Activated T-helper 2 cell treated with anti-CD3 and anti-CD28 coated beads, Interferon-gamma antibody, Interleukin-2, Interleukin-4, amounts not matched to agents 10 μg/mL and 5 μg/mL and 100 μg/mL, durations not matched to agents 14 hours and 24 hours and 36 hours (primary cell): ENCODE measurements at regions of chr1 and their contacts with region 1.

Region 1: DNA sequence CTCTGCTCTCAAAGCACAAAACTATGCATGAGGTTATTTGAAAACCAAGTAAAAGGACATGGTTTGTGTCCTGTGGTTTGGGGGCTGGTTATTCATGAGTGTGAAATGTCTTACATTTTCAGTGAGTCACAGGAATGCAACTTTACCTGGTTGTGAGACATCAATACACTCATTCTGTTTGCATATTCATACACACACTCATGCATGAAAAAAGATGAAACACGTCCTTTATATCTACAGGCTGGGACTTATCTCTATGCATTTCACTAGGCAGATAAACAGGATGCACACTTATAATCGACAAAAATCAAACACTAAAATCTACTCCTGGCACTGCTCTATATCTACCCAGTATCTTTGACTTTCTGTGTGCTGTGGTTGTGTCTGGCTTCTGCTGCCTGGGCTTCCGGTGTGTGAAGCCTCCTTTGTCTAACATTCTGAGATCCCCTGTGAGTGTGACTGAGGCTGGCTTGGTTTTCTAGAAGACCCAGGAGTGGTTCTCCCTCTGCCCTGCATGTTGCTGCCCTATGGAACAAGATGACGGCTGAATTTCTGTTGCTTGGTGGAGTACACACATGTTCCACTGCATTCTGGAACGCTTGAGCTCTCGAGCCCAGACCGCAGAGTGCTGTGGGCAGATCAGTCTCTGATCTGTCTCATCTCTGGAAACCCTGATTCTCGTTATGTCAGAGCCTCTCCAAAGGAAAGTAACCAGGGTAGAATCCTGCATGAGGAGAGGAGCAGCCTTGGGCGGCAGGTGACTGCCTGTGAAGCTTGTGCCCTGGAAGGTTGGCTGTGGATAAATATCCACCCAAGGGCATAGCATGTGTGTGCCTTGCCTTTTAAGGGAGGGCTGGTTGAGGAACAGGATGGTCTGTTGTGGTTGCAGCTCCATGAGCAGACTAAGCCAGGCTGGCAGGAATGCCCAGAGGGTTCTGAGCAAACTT is 19.7 kb upstream of the FASLG start:
- DNase-seq: peak; percentile 76
- H3K4me3 Mint-ChIP-seq: peak overlapping the region; percentile 47
- H3K27ac Mint-ChIP-seq: peak overlapping the region; percentile 98
- H3K4me1 Mint-ChIP-seq: peaks cover 74% of the 10 kb centered on the region
- H3K27me3 Mint-ChIP-seq: peaks cover 5% of the 10 kb centered on the region

Region 2: GRCh38 chr1:172449585-172450534 is 189.3 kb before region 1 on chr1:
- intact Hi-C with region 1: loop called (anchors 1 kb)
- DNase-seq: peak; percentile 29
- H3K4me3 Mint-ChIP-seq: no peak overlapping the region
- H3K27ac Mint-ChIP-seq: no peak overlapping the region
- H3K4me1 Mint-ChIP-seq: peaks cover 32% of the 10 kb centered on the region
- H3K27me3 Mint-ChIP-seq: peaks cover 2% of the 10 kb centered on the region

Region 3: DNA sequence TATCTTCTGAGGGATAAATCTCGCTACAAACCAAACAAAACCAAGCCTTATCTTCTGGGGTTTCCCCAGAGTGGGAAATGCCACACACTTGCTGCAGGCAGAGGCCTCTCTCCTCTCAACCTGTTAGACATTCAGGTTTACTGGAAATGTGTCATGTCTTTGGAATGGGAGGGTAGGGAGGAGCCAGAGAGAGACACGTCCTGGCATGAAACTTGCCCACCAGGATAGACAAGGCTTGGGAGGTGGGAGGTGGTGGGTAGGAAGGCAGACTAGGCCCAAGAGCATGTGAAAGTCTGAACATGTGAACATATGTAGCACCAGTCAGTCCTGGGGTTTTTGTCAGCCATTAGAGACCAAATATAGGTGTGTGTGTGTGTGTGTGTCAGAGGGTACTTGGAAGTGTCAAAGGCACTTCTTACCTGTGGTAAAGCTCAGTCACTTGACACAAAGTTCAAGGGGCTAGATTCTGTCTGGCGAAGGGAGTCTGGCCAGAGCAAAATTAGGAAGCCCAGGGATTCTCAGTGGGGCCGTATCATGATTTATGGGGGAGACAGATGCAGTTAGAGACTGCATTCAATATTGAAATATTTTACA is 162.8 kb before region 1 on chr1:
- intact Hi-C with region 1: no loop called
- DNase-seq: no peak
- H3K4me3 Mint-ChIP-seq: no peak overlapping the region
- H3K27ac Mint-ChIP-seq: no peak overlapping the region
- H3K4me1 Mint-ChIP-seq: peaks cover 3% of the 10 kb centered on the region
- H3K27me3 Mint-ChIP-seq: peaks cover 9% of the 10 kb centered on the region

Region 4: DNA sequence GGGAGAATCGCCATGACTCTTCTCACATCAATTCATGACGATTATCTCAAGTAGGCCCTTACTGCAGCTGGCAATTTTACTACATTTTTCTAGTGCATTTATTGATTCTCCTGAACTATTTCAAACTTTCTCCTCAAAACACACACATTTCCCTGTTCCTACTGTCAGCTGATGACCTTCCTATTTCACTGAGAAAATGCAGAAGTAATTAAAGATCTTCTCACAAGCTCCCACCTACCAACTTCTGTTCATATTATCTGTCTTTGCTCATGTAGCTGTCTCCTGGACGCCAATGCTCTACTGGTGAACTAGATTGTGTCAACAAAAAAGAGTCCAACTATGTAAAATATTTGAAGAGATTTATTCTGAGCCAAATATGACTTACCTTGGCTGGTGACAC is 16.6 kb before region 1 on chr1:
- intact Hi-C with region 1: no loop called
- DNase-seq: no peak
- H3K4me3 Mint-ChIP-seq: no peak overlapping the region
- H3K27ac Mint-ChIP-seq: no peak overlapping the region
- H3K4me1 Mint-ChIP-seq: peaks cover 8% of the 10 kb centered on the region
- H3K27me3 Mint-ChIP-seq: peaks cover 9% of the 10 kb centered on the region

Region 5: DNA sequence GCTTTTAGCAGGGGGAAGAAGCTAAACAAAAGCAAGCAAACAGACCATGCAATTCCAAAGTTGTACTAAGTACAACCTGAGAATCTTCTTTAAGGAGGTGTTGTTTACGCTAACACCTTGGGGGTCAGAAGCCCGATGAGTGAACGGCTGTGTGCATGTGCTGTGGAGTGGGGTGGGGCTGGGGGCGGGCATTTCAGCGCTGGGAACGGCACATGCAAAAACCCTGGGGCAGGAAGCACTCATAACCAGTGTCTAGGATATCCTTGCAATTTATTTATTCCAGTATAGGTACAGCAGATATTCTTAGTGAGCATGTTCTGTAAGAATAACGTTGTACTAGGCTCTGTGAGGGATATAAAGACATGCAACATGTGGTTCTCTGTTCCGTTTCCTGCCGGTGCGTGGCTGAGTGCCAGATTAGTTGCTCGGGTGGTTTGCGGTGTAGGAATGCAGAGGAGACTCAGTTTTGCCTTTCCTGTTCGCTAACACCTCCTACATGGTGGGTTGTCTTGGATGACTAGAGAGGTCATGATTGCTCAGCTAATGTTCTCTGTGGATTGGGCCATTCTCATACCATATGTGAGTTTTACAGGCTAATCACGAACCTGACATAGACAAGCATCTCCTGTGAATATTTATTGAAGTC is 23.4 kb after region 1 on chr1:
- intact Hi-C with region 1: loop called (anchors 1 kb)
- DNase-seq: peak; percentile 80
- H3K4me3 Mint-ChIP-seq: peak overlapping the region; percentile 90
- H3K27ac Mint-ChIP-seq: peak overlapping the region; percentile 94
- H3K4me1 Mint-ChIP-seq: peaks cover 74% of the 10 kb centered on the region
- H3K27me3 Mint-ChIP-seq: no peaks in the 10 kb centered on the region

Region 6: DNA sequence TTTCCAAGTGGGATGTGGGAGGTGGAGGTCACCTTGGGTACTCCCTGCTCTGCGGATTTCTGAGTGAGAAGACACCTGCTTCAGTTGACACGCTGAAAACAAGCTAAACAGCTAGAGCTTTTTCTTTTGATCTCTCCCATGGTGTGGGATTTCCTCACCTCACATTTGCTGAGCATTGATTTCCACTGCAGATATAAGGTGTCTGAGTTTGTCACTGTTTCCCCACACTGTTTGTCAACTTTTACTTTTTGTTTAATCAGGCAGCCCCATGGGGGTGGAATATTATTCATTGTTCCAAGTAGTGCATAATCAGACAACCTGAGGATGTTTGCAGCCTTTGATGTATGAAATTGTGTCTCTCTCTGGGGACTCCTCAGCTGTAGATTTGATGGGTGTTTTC is 69.3 kb after region 1 on chr1:
- intact Hi-C with region 1: loop called (anchors 1 kb)
- DNase-seq: peak; percentile 47
- H3K4me3 Mint-ChIP-seq: peak overlapping the region; percentile 24
- H3K27ac Mint-ChIP-seq: peak overlapping the region; percentile 81
- H3K4me1 Mint-ChIP-seq: peaks cover 53% of the 10 kb centered on the region
- H3K27me3 Mint-ChIP-seq: no peaks in the 10 kb centered on the region

Region 7: DNA sequence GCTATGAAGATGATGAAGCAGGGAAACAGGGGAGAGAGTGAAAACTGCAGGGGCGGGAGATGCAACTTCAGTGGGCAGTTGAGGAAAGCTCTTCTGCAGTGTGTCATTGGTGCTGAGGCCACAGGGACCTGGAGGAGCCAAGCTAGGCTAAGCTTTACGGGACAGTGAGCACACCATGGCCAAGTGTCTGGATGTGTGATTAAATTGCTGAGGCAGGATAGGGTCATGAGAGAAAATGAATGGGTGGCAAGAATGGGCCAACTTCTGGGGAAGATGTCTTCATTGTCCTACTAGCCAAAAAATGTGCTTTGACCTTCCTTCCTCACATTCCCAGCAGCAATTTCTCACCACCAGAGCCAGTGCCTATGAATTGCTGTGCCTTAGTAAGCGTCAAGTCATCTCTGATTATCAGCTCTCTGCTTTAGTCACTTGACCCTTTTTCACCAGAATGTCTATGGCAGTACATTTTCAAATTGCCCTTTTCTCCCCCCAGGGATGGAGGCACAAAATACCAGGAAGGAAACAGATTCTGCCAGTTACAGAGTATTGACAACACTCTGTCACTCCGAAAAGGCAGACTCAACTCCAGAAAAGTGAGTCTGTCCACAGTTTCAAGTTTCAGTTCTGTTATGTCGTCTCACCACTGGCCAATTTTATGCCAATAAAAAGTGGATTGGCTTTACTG is 244.1 kb after region 1 on chr1:
- intact Hi-C with region 1: loop called (anchors 10 kb)
- DNase-seq: no peak
- H3K4me3 Mint-ChIP-seq: no peak overlapping the region
- H3K27ac Mint-ChIP-seq: peak overlapping the region; percentile 18
- H3K4me1 Mint-ChIP-seq: peaks cover 19% of the 10 kb centered on the region
- H3K27me3 Mint-ChIP-seq: peaks cover 67% of the 10 kb centered on the region